Aorta (tissue), 5 donors: ENCODE measurements at regions of chr2 and their contacts with region 1.

Region 1: GRCh38 chr2:21042958-21043743 is 722 bp downstream of the APOB start:
- DNase-seq: peak; percentile 70 to 90
- ATAC-seq: peak; percentile 82
- H3K4me3 ChIP-seq: no peak overlapping the region
- H3K27ac ChIP-seq: peak overlapping the region; percentile 31 to 61
- H3K4me1 ChIP-seq: peaks cover 0 to 2% of the 10 kb centered on the region in 2 donors
- H3K27me3 ChIP-seq: no peaks in the 10 kb centered on the region

Region 2: DNA sequence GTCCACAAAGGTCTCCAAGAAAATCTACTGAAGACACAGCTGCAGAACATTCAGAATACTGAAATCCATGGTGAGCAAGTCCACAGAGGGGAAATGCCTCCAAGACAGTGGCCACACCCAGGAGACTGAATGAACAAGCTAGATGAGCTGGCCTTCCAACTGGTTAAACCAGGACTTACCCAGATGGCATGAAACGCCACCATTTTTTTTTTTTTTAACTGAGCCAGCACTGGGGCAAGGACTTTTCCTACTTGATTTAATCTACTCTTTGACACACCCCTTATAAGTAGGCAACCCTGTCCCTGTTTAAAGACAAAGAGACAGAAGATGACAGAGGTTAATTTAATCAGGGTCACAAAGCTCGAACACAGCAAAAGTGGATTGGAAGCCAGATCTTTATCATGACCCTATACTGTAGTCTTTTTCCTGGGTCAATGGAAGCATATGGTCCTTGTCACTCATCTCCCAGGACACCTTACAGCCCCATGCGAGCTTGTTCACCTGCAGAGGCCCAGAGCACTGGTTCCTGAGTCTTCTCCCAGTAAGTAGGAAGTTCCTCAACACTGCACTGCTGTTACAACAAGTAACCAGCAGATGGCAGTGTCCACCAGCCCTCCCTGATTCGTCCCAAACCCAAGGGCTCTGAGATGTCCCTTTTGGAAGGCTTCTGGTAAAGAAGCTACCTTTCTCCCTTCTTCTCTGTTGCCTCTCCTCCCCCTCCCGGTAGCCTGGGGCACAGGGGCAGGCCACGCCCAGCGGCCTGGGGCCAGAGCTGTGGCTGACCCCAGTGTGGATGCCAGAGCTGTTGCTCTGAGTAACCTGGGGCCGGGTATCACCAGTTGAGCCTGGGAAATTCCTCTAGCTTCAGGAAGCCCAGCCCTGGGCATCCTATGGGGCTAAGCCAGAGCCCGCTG is 381.8 kb before region 1 on chr2:
- intact Hi-C with region 1: loop called in 1 of 2 experiments (anchors 5 kb)
- DNase-seq: peak in 1 of 2 donors; percentile 67
- ATAC-seq: peak; percentile 87
- H3K4me3 ChIP-seq: no peak overlapping the region
- H3K27ac ChIP-seq: no peak overlapping the region
- H3K4me1 ChIP-seq: no peaks in the 10 kb centered on the region
- H3K27me3 ChIP-seq: no peaks in the 10 kb centered on the region

Region 3: GRCh38 chr2:20970068-20970467 is 73.1 kb before region 1 on chr2:
- intact Hi-C with region 1: loop called in 1 of 2 experiments (anchors 5 kb)
- DNase-seq: no peak
- ATAC-seq: no peak
- H3K4me3 ChIP-seq: no peak overlapping the region
- H3K27ac ChIP-seq: no peak overlapping the region
- H3K4me1 ChIP-seq: peaks cover 0 to 13% of the 10 kb centered on the region in 2 donors
- H3K27me3 ChIP-seq: no peaks in the 10 kb centered on the region

Region 4: GRCh38 chr2:21118302-21118920 is 75.3 kb after region 1 on chr2:
- intact Hi-C with region 1: loop called (anchors 1 to 2 kb)
- DNase-seq: no peak
- ATAC-seq: no peak
- H3K4me3 ChIP-seq: no peak overlapping the region
- H3K27ac ChIP-seq: no peak overlapping the region
- H3K4me1 ChIP-seq: no peaks in the 10 kb centered on the region
- H3K27me3 ChIP-seq: no peaks in the 10 kb centered on the region

Region 5: GRCh38 chr2:21317131-21317530 is 274.0 kb after region 1 on chr2:
- intact Hi-C with region 1: loop called in 1 of 2 experiments (anchors 2 kb)
- DNase-seq: peak in 1 of 2 donors; percentile 54
- ATAC-seq: no peak
- H3K4me3 ChIP-seq: no peak overlapping the region
- H3K27ac ChIP-seq: no peak overlapping the region
- H3K4me1 ChIP-seq: peaks cover 0 to 4% of the 10 kb centered on the region in 2 donors
- H3K27me3 ChIP-seq: no peaks in the 10 kb centered on the region